ENCODE measurements at regions of chr11 and their contacts with region 1.

Region 1: GRCh38 chr11:12043959-12044819 is 35.8 kb upstream of the DKK3 start:
- DNase-seq: peak; percentile 95
- H3K4me3 ChIP-seq: peak overlapping the region in 1 of 4 donors; percentile 10
- H3K27ac ChIP-seq: peak overlapping the region; percentile 46 to 82 (median 74)
- H3K4me1 ChIP-seq: peaks cover 0 to 25% (median 20%) of the 10 kb centered on the region in 4 donors
- H3K27me3 ChIP-seq: no peaks in the 10 kb centered on the region
- CTCF ChIP-seq: peak; percentile 87 to 96 (median 92)
- EP300 ChIP-seq: peak in 3 of 4 donors; percentile 22 to 98 (median 39)
- POLR2A ChIP-seq: no peak

Region 2: DNA sequence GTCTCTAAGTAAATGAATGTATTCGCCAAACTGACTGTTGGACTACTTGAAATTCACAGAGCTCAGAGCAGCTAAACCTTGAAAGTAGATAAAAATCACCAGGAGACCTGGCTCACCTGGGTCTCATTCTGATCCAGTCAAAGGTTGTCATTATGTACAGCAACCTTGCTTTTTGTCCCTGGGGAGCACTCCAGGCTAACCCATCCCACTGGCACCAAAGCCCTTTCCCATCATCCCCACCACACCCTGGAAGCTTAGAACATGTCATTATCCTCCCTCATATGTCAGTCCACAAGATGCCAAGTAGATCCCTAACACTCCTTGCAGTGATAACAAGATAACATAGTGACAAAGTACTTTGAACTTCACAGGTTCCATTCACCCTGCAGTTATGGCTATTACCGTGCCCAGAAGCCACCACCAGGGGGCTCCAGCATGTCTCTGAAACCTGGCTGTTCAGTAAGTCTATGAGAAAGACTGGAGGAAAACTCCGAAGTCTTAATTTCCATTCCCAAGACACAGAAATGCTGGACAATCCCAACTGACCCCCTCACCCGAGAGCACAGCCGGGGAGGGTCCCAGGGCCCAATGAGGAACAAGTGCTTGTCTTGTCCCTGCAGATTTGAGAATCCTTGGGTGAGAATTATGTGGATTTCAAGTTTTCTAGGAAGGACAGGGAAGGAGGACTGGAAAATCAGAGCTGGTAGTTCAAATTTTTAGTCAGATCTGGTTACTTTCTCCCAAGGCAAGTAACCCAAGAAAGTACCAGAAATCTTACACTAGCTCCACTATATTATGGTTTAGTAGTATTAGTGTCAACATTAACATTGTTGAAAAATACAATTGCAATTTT is 245.4 kb before region 1 on chr11:
- intact Hi-C with region 1: loop called (anchors 1 kb)
- DNase-seq: peak; percentile 92
- H3K4me3 ChIP-seq: no peak overlapping the region
- H3K27ac ChIP-seq: no peak overlapping the region
- H3K4me1 ChIP-seq: no peaks in the 10 kb centered on the region
- H3K27me3 ChIP-seq: no peaks in the 10 kb centered on the region
- CTCF ChIP-seq: peak; percentile 61 to 89 (median 84)
- EP300 ChIP-seq: no peak
- POLR2A ChIP-seq: no peak

Region 3: DNA sequence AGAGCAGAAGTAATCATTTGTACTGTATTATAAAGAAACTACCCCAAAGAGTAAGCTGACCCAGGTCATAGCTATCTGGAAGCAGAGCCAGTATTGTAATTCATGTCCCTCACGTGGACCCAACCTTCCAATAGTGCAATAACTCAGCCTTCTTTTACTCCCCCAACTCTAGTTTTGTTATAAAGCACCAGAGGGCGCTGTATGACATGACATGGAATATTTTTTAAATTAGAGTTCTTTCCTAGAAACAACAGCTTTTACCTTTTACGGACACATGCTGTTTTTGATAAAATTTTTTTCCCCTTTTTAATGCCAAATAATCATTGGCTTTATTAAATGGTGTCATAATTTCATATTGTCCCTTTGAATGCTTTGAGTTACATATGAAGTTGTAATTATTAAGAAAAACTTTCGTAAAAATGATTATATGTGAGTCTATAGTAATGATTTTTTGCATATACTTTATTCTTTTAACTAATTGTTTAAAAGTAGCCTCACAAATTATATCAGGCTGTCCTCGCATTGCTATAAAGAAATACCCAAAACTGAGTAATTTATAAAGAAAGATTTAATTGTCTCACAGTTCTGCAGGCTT is 112.6 kb before region 1 on chr11:
- intact Hi-C with region 1: loop called (anchors 1 kb)
- DNase-seq: no peak
- H3K4me3 ChIP-seq: no peak overlapping the region
- H3K27ac ChIP-seq: peak overlapping the region in 1 of 4 donors; percentile 59
- H3K4me1 ChIP-seq: no peaks in the 10 kb centered on the region
- H3K27me3 ChIP-seq: no peaks in the 10 kb centered on the region
- CTCF ChIP-seq: peak in 3 of 4 experiments; percentile 43 to 62 (median 51)
- EP300 ChIP-seq: no peak
- POLR2A ChIP-seq: no peak

Region 4: DNA sequence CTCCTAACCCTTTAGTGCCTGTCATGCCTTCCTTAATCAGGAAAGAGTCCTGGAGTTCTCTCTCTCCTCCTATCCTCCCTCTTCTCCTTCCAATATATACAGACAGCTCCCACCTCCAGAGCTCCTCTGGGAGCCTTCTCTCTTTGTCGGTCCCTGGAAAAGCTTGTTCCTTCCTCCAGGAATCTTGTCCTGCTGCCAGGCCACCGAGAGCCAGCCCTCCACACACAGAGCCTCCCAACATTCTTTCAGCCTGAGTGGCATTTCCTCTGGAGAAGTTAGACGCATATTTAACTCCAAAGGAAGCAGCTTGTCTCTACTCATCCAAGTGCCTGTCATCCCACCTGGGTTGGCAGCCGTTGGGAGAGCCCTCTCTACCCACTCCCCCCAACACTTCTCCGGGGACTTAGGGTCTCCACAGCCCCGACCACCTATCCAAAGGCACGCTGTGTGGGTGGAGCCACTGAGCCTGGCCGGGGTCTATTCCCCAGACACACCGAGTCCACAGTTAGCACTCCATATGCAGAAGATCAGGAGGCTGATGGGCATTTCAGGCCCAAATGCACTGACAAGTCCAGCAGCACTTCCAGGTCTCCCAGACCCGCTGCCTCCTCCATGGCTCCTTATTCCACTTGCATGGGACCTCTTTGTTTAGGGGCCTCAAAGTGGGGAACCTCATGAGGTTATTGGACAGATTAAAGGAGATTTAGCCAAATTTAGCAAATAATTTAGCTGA is 66.8 kb before region 1 on chr11:
- intact Hi-C with region 1: loop called (anchors 5 kb)
- DNase-seq: peak; percentile 93
- H3K4me3 ChIP-seq: no peak overlapping the region
- H3K27ac ChIP-seq: peak overlapping the region; percentile 62 to 87 (median 82)
- H3K4me1 ChIP-seq: peaks cover 0 to 77% (median 75%) of the 10 kb centered on the region in 4 donors
- H3K27me3 ChIP-seq: no peaks in the 10 kb centered on the region
- CTCF ChIP-seq: no peak
- EP300 ChIP-seq: no peak
- POLR2A ChIP-seq: no peak

Region 5: DNA sequence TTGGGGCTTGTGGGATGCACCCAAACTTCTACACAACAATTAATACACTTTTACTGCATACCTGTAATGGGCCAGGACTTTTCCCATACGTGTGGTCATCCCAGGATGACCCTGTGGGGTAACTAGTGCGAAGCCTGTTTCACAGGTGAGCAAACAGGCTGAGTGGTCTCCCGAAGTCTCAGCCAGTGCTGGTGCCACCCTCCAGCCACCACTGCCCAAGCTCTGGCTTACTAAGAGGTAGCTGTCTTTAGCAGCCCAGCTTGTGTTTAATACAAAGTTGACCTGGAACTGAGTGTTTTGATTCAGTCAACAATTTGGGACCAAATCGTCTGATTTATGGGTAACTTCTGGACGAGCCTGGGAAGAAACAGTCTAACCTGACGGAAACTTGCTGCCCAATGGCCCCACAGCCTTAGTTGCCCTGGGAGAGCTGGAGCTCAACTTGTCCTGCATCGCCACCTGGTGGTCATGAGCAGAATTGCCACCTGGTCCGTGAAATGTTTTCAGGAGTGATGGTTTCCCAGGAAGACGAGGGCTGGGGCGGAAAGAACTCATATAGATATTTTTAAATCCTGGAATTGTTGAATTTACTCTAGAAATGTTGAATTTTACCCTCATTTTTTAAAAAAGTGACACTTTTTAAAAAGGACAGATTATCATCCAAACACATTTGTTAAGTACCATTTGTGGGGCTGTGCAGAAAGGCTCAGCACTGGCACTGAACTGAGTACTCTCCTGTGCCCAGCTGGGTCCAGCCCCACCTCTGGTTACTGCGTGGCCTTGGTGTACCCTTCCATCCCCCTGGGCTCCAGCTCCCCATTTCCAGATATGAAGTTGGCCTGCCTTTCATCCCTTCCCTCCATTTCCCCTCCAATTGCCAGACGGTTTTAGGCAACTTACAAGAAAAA is 237.6 kb after region 1 on chr11:
- intact Hi-C with region 1: loop called (anchors 1 kb)
- DNase-seq: peak; percentile 92
- H3K4me3 ChIP-seq: no peak overlapping the region
- H3K27ac ChIP-seq: peak overlapping the region in 1 of 4 donors; percentile 13
- H3K4me1 ChIP-seq: peaks cover 0 to 39% (median 29%) of the 10 kb centered on the region in 4 donors
- H3K27me3 ChIP-seq: no peaks in the 10 kb centered on the region
- CTCF ChIP-seq: peak; percentile 95 to 99 (median 99)
- EP300 ChIP-seq: no peak
- POLR2A ChIP-seq: no peak

Measured in sigmoid colon (tissue), 7 donors.